AG04450 (cell line): ENCODE measurements at regions of chr1 and their contacts with region 1.

Region 1: DNA sequence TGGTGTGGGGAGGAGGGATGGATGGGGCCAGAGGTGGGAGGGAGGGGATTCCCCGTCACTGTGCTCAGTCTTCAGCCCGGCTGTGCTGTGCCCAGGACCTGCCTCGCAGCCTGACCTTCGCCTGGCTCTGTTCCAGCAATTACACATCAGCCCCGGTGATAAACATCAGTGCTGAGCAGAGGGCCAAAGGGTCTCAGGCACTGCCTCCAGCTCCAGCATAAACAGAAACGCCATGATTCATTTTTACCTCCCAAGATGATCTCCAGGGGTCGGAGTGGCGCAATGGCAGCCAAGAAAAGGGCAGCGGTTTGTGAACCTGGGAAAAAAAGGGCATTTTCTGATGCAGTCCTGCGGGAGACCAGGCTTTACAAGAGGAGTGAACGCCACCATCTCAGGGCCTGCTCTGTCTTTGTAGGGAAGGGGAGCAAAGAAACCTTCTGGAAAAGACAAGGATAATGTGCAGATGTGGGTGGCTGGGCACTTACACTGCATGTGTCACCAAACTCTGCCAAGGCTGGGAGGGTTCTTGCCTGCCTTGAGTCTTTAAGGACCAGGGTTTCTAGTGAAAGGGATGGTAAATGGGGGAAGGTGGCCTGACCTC is 28.1 kb downstream of the SHISA4 start:
- DNase-seq: peak; percentile 79
- H3K4me3 ChIP-seq: no peak overlapping the region
- H3K27ac ChIP-seq: peak overlapping the region; percentile 93
- H3K27me3 ChIP-seq: no peaks in the 10 kb centered on the region
- CTCF ChIP-seq: no peak

Region 2: DNA sequence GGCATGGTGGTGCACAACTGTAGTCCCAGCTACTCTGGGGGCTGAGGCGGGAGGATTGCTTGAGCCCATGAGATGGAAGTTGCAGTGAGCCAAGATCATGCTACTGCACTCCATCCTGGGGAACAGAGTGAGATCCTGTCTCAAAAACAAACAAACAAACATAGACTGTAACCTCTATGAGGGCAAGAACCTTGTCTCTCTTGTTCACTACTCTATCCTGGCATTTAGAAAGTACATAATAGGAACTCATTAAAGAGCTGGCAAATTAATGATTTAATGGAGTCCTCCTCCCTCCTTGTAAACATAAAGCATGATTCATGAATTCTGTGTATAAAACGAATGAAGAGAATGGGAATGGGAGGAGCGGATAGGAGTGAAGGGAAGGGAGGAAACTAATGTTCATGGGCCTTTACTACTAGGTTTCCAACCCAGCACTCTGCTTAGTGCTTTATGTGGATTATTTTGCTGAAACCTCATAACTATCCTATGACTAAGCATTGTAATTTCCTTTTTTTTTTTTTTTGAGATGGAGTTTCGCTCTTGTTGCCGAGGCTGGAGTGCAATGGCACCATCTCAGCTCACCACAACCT is 21.0 kb after region 1 on chr1:
- CTCF ChIA-PET with region 1: no interaction called
- POLR2A ChIA-PET with region 1: interaction called, 11 read pairs
- DNase-seq: peak; percentile 77
- H3K4me3 ChIP-seq: no peak overlapping the region
- H3K27ac ChIP-seq: peak overlapping the region; percentile 92
- H3K27me3 ChIP-seq: no peaks in the 10 kb centered on the region
- CTCF ChIP-seq: no peak

Region 3: DNA sequence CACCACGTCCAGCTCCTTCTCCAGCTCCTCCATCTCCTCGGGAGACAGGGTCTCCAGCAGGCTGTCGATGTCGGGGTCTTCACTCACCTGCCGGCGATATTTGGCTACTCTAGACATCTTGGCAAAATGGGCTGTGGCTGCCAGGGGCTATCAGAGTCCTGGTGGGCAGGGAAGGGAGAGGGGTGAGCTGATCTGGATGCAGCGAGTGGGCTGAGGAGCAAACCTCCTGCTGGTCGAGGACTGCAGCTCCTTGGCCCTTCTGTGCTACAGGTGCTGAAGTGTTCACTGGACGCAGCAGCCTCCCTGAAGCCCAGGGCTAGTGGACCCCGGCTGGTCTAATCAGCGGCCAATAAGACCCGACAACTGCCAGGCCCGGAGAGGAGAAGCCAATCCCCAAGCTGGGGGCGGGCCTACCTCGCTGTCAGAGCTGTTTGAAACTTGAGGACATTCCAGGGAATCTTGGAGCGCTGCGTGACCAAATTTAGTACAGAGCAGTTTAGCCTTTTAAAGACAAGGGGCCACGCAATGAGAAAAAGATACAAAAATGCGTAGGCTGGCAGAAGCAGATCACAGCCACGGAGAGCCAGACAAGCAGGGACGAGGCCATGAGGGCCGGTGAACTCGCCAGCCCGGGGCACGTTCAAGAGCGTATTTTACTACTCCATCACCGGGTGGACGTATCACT is 29.6 kb after region 1 on chr1 and contains the start of gene LMOD1:
- CTCF ChIA-PET with region 1: interaction called, 4 read pairs
- POLR2A ChIA-PET with region 1: interaction called, 13 read pairs
- DNase-seq: peak; percentile 95
- H3K4me3 ChIP-seq: peak within 1 kb of the TSS; percentile 98
- H3K27ac ChIP-seq: peak within 1 kb of the TSS; percentile 99
- H3K27me3 ChIP-seq: no peaks in the 10 kb centered on the region
- CTCF ChIP-seq: peak; percentile 26; the same call in 1 of the 2 replicates
- polyA plus RNA-seq, gene LMOD1: 41.1 and 52.6 TPM in 2 replicates